Calu3 (cell line): ENCODE measurements at regions of chr3 and their contacts with region 1.

Region 1: GRCh38 chr3:144770915-144771351 is 799.3 kb downstream of the DIPK2A start:
- DNase-seq: peak; percentile 55
- H3K4me3 Mint-ChIP-seq: no peak overlapping the region
- H3K27ac Mint-ChIP-seq: no peak overlapping the region
- H3K4me1 Mint-ChIP-seq: no peaks in the 10 kb centered on the region
- H3K27me3 Mint-ChIP-seq: no peaks in the 10 kb centered on the region
- CTCF ChIP-seq: no peak

Region 2: GRCh38 chr3:143895805-143896204 is 875.1 kb before region 1 on chr3:
- CTCF ChIA-PET with region 1: interaction called, 11 read pairs
- intact Hi-C with region 1: loop called (anchors 2 kb)
- DNase-seq: no peak
- H3K4me3 Mint-ChIP-seq: no peak overlapping the region
- H3K27ac Mint-ChIP-seq: no peak overlapping the region
- H3K4me1 Mint-ChIP-seq: peaks cover 9% of the 10 kb centered on the region
- H3K27me3 Mint-ChIP-seq: no peaks in the 10 kb centered on the region
- CTCF ChIP-seq: peak; percentile 36

Region 3: DNA sequence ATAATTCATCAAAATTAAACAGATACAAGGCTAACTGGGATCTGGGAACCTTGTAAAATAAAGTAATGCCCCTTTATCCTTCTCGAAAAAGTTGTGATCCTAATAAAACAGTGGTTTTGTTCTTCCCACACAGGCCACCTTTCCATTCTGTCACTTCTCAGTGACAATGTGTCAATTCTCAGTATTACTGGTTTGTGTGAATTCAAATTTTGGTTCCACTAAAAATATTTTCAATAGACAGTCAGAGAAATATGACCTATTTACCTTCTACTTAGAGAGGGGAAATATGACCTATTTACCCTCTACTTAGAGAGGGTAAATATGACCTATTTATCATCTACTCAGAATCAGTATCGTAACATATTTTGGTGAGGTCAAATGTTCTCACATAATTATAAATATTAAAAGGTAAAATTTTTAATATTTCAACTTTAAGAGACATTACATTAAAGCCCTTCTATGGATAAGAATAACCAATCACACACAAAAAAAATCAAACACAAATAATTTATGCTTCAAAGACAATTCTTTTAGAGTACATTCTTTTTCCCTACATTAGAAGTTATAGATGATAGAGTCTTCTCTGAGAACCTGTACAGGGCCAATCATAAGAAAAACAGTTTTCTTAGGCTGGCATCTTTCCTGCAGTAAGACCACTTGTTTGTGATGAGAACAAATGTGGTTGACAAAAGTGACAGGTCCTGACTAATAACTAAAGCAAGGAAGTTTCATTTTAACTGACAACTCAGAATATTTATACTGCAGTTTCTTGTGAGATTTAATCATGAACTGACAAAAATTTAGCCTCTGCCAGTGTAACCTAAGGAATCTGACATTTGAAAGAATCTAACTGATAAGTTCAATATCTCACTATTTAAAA is 476.0 kb before region 1 on chr3:
- CTCF ChIA-PET with region 1: no interaction called
- intact Hi-C with region 1: loop called (anchors 5 kb)
- DNase-seq: no peak
- H3K4me3 Mint-ChIP-seq: peak overlapping the region; percentile 33
- H3K27ac Mint-ChIP-seq: peak overlapping the region; percentile 69
- H3K4me1 Mint-ChIP-seq: peaks cover 29% of the 10 kb centered on the region
- H3K27me3 Mint-ChIP-seq: no peaks in the 10 kb centered on the region
- CTCF ChIP-seq: no peak

Region 4: DNA sequence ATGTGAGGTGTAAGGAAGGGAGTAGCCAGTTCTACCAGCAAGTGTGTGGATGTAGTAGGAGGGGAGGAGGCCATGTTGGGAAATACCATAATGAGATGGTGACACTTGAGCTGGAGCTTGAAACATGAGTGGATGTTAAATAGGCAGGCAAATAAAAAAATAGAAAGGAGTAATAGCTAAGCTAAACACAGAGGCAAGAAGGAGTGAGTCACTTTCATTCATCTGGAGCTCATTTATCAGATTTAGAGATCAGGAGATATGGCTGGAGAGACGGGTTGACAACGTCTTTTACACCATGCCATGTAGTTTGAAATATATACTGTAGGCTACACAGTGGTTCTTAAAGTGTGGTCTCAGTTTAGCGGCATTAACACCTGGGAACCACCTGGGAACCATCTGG is 408.8 kb before region 1 on chr3:
- CTCF ChIA-PET with region 1: no interaction called
- intact Hi-C with region 1: loop called (anchors 5 kb)
- DNase-seq: peak; percentile 46
- H3K4me3 Mint-ChIP-seq: no peak overlapping the region
- H3K27ac Mint-ChIP-seq: peak overlapping the region; percentile 63
- H3K4me1 Mint-ChIP-seq: peaks cover 43% of the 10 kb centered on the region
- H3K27me3 Mint-ChIP-seq: no peaks in the 10 kb centered on the region
- CTCF ChIP-seq: no peak

Region 5: GRCh38 chr3:144866476-144866875 is 95.5 kb after region 1 on chr3:
- CTCF ChIA-PET with region 1: no interaction called
- intact Hi-C with region 1: no loop called
- DNase-seq: no peak
- H3K4me3 Mint-ChIP-seq: no peak overlapping the region
- H3K27ac Mint-ChIP-seq: no peak overlapping the region
- H3K4me1 Mint-ChIP-seq: peaks cover 12% of the 10 kb centered on the region
- H3K27me3 Mint-ChIP-seq: no peaks in the 10 kb centered on the region
- CTCF ChIP-seq: no peak